ENCODE measurements at regions of chr22 and their contacts with region 1.

Region 1: GRCh38 chr22:31496007-31496734 is at the start of gene SFI1:
- DNase-seq: peak; percentile 99
- H3K4me3 Mint-ChIP-seq: peak within 1 kb of the TSS; percentile 90
- H3K27ac Mint-ChIP-seq: peak within 1 kb of the TSS; percentile 93
- H3K4me1 Mint-ChIP-seq: peaks cover 36% of the 10 kb centered on the region
- H3K27me3 Mint-ChIP-seq: no peaks in the 10 kb centered on the region
- total RNA-seq, gene SFI1: 321 and 352 TPM in 2 replicates

Region 2: DNA sequence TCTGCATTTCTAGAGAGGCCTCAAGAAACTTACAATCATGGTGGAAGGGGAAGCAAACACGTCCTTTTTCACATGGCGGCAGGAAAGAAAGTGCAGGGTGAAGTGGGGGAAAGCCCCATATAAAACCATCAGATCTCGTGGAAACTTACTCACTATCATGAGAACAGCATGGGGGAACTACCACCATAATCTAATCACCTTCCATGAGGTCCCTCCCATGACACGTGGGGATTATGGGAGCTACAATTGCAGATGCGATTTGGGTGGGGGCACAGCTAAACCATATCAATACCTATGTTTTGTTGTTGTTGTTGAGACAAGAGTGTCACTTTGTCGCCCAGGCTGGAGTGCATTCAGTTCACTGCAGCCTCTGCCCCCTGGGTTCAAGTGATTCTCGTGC is 30.1 kb after region 1 on chr22:
- intact Hi-C with region 1: loop called (anchors 1 kb)
- DNase-seq: peak; percentile 73
- H3K4me3 Mint-ChIP-seq: peak overlapping the region; percentile 64
- H3K27ac Mint-ChIP-seq: peak overlapping the region; percentile 96
- H3K4me1 Mint-ChIP-seq: peaks cover 47% of the 10 kb centered on the region
- H3K27me3 Mint-ChIP-seq: no peaks in the 10 kb centered on the region

Region 3: GRCh38 chr22:31537019-31537535 is 40.9 kb after region 1 on chr22:
- intact Hi-C with region 1: loop called (anchors 1 kb)
- DNase-seq: peak; percentile 84
- H3K4me3 Mint-ChIP-seq: peak overlapping the region; percentile 76
- H3K27ac Mint-ChIP-seq: peak overlapping the region; percentile 99
- H3K4me1 Mint-ChIP-seq: peaks cover 54% of the 10 kb centered on the region
- H3K27me3 Mint-ChIP-seq: no peaks in the 10 kb centered on the region

Region 4: GRCh38 chr22:31544481-31545480 is 48.6 kb after region 1 on chr22:
- intact Hi-C with region 1: loop called (anchors 2 kb)
- DNase-seq: no peak
- H3K4me3 Mint-ChIP-seq: no peak overlapping the region
- H3K27ac Mint-ChIP-seq: no peak overlapping the region
- H3K4me1 Mint-ChIP-seq: peaks cover 16% of the 10 kb centered on the region
- H3K27me3 Mint-ChIP-seq: no peaks in the 10 kb centered on the region

Region 5: GRCh38 chr22:31585161-31585859 is 89.1 kb after region 1 on chr22:
- intact Hi-C with region 1: loop called (anchors 2 kb)
- DNase-seq: peak; percentile 67
- H3K4me3 Mint-ChIP-seq: peak overlapping the region; percentile 35
- H3K27ac Mint-ChIP-seq: peak overlapping the region; percentile 88
- H3K4me1 Mint-ChIP-seq: peaks cover 44% of the 10 kb centered on the region
- H3K27me3 Mint-ChIP-seq: no peaks in the 10 kb centered on the region

Measured in activated CD4-positive, alpha-beta T cell treated with anti-CD3 and anti-CD28 coated beads, Interleukin-2, amount 10 ng/mL, durations not matched to agents 24 days and 14 days (primary cell).